ENCODE measurements at regions of chr3 and their contacts with region 1.

Region 1: DNA sequence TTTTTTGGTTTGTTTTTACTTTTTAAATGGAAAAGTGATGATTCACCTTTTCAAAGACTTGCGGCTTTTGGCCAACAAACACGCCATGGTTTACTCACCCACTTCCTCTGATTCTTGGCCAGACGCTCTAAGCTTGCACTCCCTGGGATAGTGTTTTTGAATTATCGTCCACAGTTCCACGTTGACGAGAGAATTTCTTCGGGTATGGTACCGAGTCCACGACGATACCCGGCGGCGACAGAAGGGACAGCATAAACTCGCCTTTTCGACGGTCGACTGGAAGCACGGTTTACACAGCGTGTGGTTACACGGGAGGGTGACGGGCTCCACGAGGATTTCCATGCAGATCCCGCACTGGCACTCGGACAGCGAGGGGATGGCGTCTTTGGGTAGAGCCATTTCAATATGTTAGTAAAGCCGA is 783 bp downstream of the RNF168 start:
- DNase-seq: peak; percentile 77
- ATAC-seq: peak; percentile 39
- H3K4me3 Mint-ChIP-seq: peak overlapping the region; percentile 96
- H3K27ac Mint-ChIP-seq: peak overlapping the region; percentile 97
- H3K4me1 Mint-ChIP-seq: peaks cover 27% of the 10 kb centered on the region
- H3K27me3 Mint-ChIP-seq: no peaks in the 10 kb centered on the region

Region 2: GRCh38 chr3:195909644-195910508 is 592.9 kb before region 1 on chr3:
- CTCF ChIA-PET with region 1: no interaction called
- POLR2A ChIA-PET with region 1: no interaction called
- intact Hi-C with region 1: loop called in 1 of 2 experiments (anchors 1 kb)
- DNase-seq: peak; percentile 94
- ATAC-seq: peak; percentile 67
- H3K4me3 Mint-ChIP-seq: peak overlapping the region; percentile 68
- H3K27ac Mint-ChIP-seq: peak overlapping the region; percentile 65
- H3K4me1 Mint-ChIP-seq: peaks cover 38% of the 10 kb centered on the region
- H3K27me3 Mint-ChIP-seq: no peaks in the 10 kb centered on the region

Region 3: GRCh38 chr3:196207833-196208607 is 294.8 kb before region 1 on chr3:
- CTCF ChIA-PET with region 1: no interaction called
- POLR2A ChIA-PET with region 1: no interaction called
- intact Hi-C with region 1: no loop called
- DNase-seq: peak; percentile 86
- ATAC-seq: peak; percentile 77
- H3K4me3 Mint-ChIP-seq: peak overlapping the region; percentile 74
- H3K27ac Mint-ChIP-seq: peak overlapping the region; percentile 29
- H3K4me1 Mint-ChIP-seq: peaks cover 11% of the 10 kb centered on the region
- H3K27me3 Mint-ChIP-seq: no peaks in the 10 kb centered on the region

Region 4: GRCh38 chr3:196317687-196318467 is 184.9 kb before region 1 on chr3 and contains the start of gene DYNLT2B:
- CTCF ChIA-PET with region 1: no interaction called
- POLR2A ChIA-PET with region 1: interaction called, 4 read pairs
- intact Hi-C with region 1: loop called in 1 of 2 experiments (anchors 1 kb)
- DNase-seq: peak; percentile 93
- ATAC-seq: peak; percentile 92
- H3K4me3 Mint-ChIP-seq: peak within 1 kb of the TSS; percentile 91
- H3K27ac Mint-ChIP-seq: peak within 1 kb of the TSS; percentile 95
- H3K4me1 Mint-ChIP-seq: peaks cover 12% of the 10 kb centered on the region
- H3K27me3 Mint-ChIP-seq: no peaks in the 10 kb centered on the region
- total RNA-seq, gene DYNLT2B: 7.3 to 16.3 TPM

Region 5: GRCh38 chr3:196399485-196399945 is 103.3 kb before region 1 on chr3:
- CTCF ChIA-PET with region 1: no interaction called
- POLR2A ChIA-PET with region 1: no interaction called
- intact Hi-C with region 1: no loop called
- DNase-seq: no peak
- ATAC-seq: no peak
- H3K4me3 Mint-ChIP-seq: no peak overlapping the region
- H3K27ac Mint-ChIP-seq: no peak overlapping the region
- H3K4me1 Mint-ChIP-seq: no peaks in the 10 kb centered on the region
- H3K27me3 Mint-ChIP-seq: no peaks in the 10 kb centered on the region

Region 6: GRCh38 chr3:196477678-196478077 is 25.1 kb before region 1 on chr3:
- CTCF ChIA-PET with region 1: no interaction called
- POLR2A ChIA-PET with region 1: no interaction called
- intact Hi-C with region 1: no loop called
- DNase-seq: no peak
- ATAC-seq: no peak
- H3K4me3 Mint-ChIP-seq: no peak overlapping the region
- H3K27ac Mint-ChIP-seq: no peak overlapping the region
- H3K4me1 Mint-ChIP-seq: no peaks in the 10 kb centered on the region
- H3K27me3 Mint-ChIP-seq: no peaks in the 10 kb centered on the region

Region 7: GRCh38 chr3:196528639-196529233 is 26.0 kb after region 1 on chr3:
- CTCF ChIA-PET with region 1: interaction called, 35 read pairs
- POLR2A ChIA-PET with region 1: no interaction called
- intact Hi-C with region 1: loop called (anchors 1 to 2 kb)
- DNase-seq: peak; percentile 93
- ATAC-seq: peak; percentile 94
- H3K4me3 Mint-ChIP-seq: peak overlapping the region; percentile 74
- H3K27ac Mint-ChIP-seq: peak overlapping the region; percentile 72
- H3K4me1 Mint-ChIP-seq: peaks cover 8% of the 10 kb centered on the region
- H3K27me3 Mint-ChIP-seq: peaks cover 2% of the 10 kb centered on the region

Region 8: DNA sequence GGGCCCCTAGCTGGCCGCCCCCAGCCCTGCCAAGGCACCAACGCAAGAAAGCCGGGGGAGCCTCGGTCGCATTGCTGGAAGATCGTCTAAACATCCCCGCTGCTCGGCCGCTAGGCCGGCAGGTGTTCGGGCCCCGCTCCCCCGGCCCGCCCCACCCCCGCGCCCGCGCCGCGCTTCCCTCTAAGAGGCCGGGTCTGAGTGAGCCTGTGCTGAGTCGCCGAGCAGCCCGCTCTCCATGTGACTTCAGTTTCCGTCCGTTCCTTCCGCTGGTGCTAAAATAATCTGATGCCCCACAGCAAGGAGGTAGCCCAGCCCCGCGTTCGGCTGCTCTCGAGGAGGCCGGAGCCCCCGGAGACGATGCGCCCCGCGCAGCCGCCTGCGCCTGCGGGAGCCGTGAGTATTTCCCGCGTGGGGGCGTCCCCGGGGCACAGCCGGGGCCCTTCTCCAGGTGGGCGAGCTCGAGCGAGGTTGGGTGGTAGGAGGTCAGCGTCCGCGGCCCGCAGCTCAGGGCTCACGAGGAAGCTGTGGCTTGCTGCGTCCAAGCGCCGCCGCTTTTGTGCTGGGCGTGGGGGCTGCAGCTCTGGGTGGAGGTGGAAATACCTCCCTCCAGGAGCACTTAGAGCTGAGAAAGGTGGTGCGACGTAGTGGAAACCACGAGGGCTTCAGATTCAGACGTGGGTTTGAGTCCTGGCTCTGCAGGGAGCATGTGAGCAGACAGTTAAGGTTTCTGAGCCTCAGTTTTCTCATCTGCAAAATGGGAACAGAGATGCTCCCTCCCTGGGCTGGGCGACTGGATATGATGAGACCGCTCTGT is 136.9 kb after region 1 on chr3 and contains the start of gene NRROS:
- CTCF ChIA-PET with region 1: no interaction called
- POLR2A ChIA-PET with region 1: no interaction called
- intact Hi-C with region 1: loop called in 1 of 2 experiments (anchors 2 kb)
- DNase-seq: peak; percentile 86
- ATAC-seq: peak; percentile 65
- H3K4me3 Mint-ChIP-seq: peak within 1 kb of the TSS; percentile 81
- H3K27ac Mint-ChIP-seq: peak within 1 kb of the TSS; percentile 98
- H3K4me1 Mint-ChIP-seq: peaks cover 62% of the 10 kb centered on the region
- H3K27me3 Mint-ChIP-seq: no peaks in the 10 kb centered on the region
- total RNA-seq, gene NRROS: 19.6 to 19.7 TPM

Region 9: GRCh38 chr3:196867507-196868296 is 364.9 kb after region 1 on chr3 and contains the start of gene SENP5:
- CTCF ChIA-PET with region 1: no interaction called
- POLR2A ChIA-PET with region 1: no interaction called
- intact Hi-C with region 1: loop called in 1 of 2 experiments (anchors 1 kb)
- DNase-seq: peak; percentile 95
- ATAC-seq: peak; percentile 96
- H3K4me3 Mint-ChIP-seq: peak within 1 kb of the TSS; percentile 99
- H3K27ac Mint-ChIP-seq: peak within 1 kb of the TSS; percentile 95
- H3K4me1 Mint-ChIP-seq: peaks cover 24% of the 10 kb centered on the region
- H3K27me3 Mint-ChIP-seq: no peaks in the 10 kb centered on the region
- total RNA-seq, gene SENP5: 27.7 to 33.0 TPM

Measured in activated CD4-positive, alpha-beta T cell treated with anti-CD3 and anti-CD28 coated beads for 36 hours (primary cell).